CD4-positive, alpha-beta T cell (primary cell): ENCODE measurements at regions of chr1 and their contacts with region 1.

Region 1: GRCh38 chr1:37553927-37554808 is at the start of gene SNIP1:
- DNase-seq: peak; percentile 80 to 96 (median 88)
- ATAC-seq: peak; percentile 98
- H3K4me3 ChIP-seq: peak within 1 kb of the TSS; percentile 71
- H3K4me3 Mint-ChIP-seq: peak within 1 kb of the TSS; percentile 99
- H3K27ac ChIP-seq: peak within 1 kb of the TSS; percentile 83
- H3K27ac Mint-ChIP-seq: peak within 1 kb of the TSS; percentile 92
- H3K4me1 ChIP-seq: peaks cover 19% of the 10 kb centered on the region
- H3K4me1 Mint-ChIP-seq: peaks cover 45% of the 10 kb centered on the region
- H3K27me3 ChIP-seq: no peaks in the 10 kb centered on the region
- H3K27me3 Mint-ChIP-seq: peaks cover 4% of the 10 kb centered on the region
- CTCF ChIP-seq: no peak
- total RNA-seq, gene SNIP1: 57.9 to 64.7 TPM

Region 2: DNA sequence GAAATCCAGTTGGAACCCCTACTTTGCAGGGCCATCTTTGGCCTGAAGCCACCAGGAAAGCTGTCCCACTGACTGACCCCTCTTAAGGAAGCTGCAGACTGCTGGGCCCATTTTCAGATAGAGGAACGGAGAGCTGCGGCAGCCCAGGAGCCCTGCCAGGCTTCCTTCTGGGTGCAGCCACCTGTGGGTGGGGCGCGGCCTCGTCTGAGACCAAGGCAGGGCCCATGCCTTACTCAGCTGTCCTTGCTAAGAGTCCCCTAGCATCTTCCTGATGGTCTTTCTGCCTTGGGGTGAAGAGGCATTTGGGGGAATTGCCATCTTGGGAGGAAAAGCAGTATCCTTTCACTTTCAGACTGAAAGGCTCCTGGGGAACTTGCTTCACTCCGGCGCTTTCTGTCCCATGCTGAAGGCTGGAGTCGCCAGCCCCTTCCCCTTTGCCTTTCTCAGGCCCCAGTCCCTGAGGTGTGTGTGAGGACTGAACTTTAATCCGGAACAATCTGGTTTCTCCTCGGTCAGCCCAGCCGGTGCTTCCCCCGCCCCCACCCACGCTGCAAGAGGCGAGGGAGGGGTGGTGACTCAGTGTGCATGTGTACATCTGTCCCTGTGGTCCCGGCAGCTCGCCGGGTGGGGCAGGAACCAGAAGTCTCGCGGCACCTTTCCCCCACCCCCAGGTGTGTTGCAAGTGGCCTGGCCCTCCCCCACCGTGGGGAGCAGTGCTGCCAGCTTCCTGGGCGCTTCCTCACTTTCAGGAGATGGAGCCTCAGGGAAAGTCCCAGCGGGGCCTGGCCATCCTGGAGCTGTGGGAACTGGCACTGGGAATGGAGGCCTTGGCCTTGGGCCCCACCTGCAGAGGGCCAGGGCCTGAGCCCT is 74.7 kb before region 1 on chr1:
- CTCF ChIA-PET with region 1: no interaction called
- POLR2A ChIA-PET with region 1: interaction called, 10 read pairs
- intact Hi-C with region 1: loop called in 1 of 2 experiments (anchors 5 kb)
- DNase-seq: peak; percentile 63 to 96 (median 89)
- ATAC-seq: peak; percentile 57
- H3K4me3 ChIP-seq: peak overlapping the region; percentile 92
- H3K4me3 Mint-ChIP-seq: peak overlapping the region; percentile 97
- H3K27ac ChIP-seq: peak overlapping the region; percentile 95 to 97
- H3K27ac Mint-ChIP-seq: peak overlapping the region; percentile 100
- H3K4me1 ChIP-seq: peaks cover 67% of the 10 kb centered on the region
- H3K4me1 Mint-ChIP-seq: peaks cover 56% of the 10 kb centered on the region
- H3K27me3 ChIP-seq: no peaks in the 10 kb centered on the region
- H3K27me3 Mint-ChIP-seq: no peaks in the 10 kb centered on the region
- CTCF ChIP-seq: no peak

Region 3: GRCh38 chr1:37506740-37507139 is 47.4 kb before region 1 on chr1:
- CTCF ChIA-PET with region 1: no interaction called
- POLR2A ChIA-PET with region 1: no interaction called
- intact Hi-C with region 1: no loop called
- DNase-seq: no peak
- ATAC-seq: no peak
- H3K4me3 ChIP-seq: no peak overlapping the region
- H3K4me3 Mint-ChIP-seq: no peak overlapping the region
- H3K27ac ChIP-seq: no peak overlapping the region
- H3K27ac Mint-ChIP-seq: no peak overlapping the region
- H3K4me1 ChIP-seq: no peaks in the 10 kb centered on the region
- H3K4me1 Mint-ChIP-seq: peaks cover 31% of the 10 kb centered on the region
- H3K27me3 ChIP-seq: no peaks in the 10 kb centered on the region
- H3K27me3 Mint-ChIP-seq: no peaks in the 10 kb centered on the region
- CTCF ChIP-seq: no peak

Region 4: DNA sequence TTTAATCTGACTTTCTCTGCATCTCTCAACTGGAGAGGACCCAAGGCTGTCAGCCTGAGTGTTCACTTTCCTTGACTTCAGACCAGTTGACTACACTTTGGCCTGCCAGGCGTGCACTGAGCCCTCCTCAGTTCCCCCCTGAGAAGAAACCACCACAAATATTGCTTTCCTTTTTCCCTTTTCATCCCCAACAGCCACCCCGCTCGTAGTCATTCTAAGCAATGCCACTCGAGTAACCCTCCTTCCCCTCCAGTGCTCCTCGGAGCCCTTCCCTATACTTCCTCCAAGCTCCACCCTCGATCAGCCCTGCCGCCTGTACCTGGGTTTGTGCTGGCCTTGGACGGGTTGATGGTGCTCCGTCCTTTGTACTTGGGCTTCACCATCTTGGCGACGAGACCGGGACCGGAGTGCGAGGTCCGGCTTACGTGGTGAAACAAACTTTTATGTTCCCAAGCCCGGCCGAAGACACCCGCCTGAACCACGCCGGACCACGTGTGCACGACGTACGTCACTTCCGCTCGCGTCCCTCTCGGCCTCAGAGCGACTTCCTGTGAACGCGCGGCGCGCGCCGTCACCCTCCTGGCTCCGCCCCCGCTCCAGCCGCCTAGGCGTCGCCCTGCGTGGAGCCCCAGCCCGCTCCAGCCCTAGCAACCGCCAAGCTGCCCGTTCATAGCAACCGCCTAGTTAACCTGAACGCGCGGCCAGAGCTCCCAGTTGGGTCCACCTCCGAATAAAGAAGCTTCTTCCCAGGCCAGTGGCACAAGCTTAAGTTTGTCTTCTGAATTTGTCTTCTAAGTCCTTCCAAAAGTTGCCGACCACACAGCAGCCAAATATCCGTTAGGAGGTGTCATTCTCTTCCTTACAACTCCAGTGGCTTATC is 41.5 kb after region 1 on chr1 and contains the start of gene GNL2:
- CTCF ChIA-PET with region 1: no interaction called
- POLR2A ChIA-PET with region 1: interaction called, 4 read pairs
- intact Hi-C with region 1: loop called (anchors 1 kb)
- DNase-seq: peak; percentile 88 to 99 (median 96)
- ATAC-seq: peak; percentile 93
- H3K4me3 ChIP-seq: peak within 1 kb of the TSS; percentile 93
- H3K4me3 Mint-ChIP-seq: peak within 1 kb of the TSS; percentile 97
- H3K27ac ChIP-seq: peak within 1 kb of the TSS; percentile 75 to 90
- H3K27ac Mint-ChIP-seq: peak within 1 kb of the TSS; percentile 93
- H3K4me1 ChIP-seq: peaks cover 22% of the 10 kb centered on the region
- H3K4me1 Mint-ChIP-seq: peaks cover 34% of the 10 kb centered on the region
- H3K27me3 ChIP-seq: no peaks in the 10 kb centered on the region
- H3K27me3 Mint-ChIP-seq: no peaks in the 10 kb centered on the region
- CTCF ChIP-seq: no peak
- total RNA-seq, gene GNL2: 43.4 to 44.5 TPM

Region 5: GRCh38 chr1:37807555-37808368 is 253.6 kb after region 1 on chr1 and contains the starts of genes C1orf122 and YRDC:
- CTCF ChIA-PET with region 1: no interaction called
- POLR2A ChIA-PET with region 1: no interaction called
- intact Hi-C with region 1: loop called in 1 of 2 experiments (anchors 2 kb)
- DNase-seq: peak; percentile 85 to 95 (median 90)
- ATAC-seq: peak; percentile 89
- H3K4me3 ChIP-seq: peak within 1 kb of the TSS; percentile 82
- H3K4me3 Mint-ChIP-seq: peak within 1 kb of the TSS; percentile 97
- H3K27ac ChIP-seq: peak within 1 kb of the TSS; percentile 85
- H3K27ac Mint-ChIP-seq: peak within 1 kb of the TSS; percentile 97
- H3K4me1 ChIP-seq: peaks cover 35% of the 10 kb centered on the region
- H3K4me1 Mint-ChIP-seq: peaks cover 44% of the 10 kb centered on the region
- H3K27me3 ChIP-seq: no peaks in the 10 kb centered on the region
- H3K27me3 Mint-ChIP-seq: no peaks in the 10 kb centered on the region
- CTCF ChIP-seq: no peak
- total RNA-seq, gene C1orf122: 10.9 to 13.2 TPM
- total RNA-seq, gene YRDC: 31.1 to 31.2 TPM